ENCODE measurements at regions of chr9 and their contacts with region 1.

Region 1: GRCh38 chr9:14433351-14434157 is 119.6 kb upstream of the NFIB start:
- DNase-seq: peak; percentile 35 to 86 (median 67)

Region 2: GRCh38 chr9:13033959-13034693 is 1399.4 kb before region 1 on chr9:
- intact Hi-C with region 1: loop called (anchors 10 kb)
- DNase-seq: peak; percentile 50 to 87 (median 76)